ENCODE measurements at regions of chr10 and their contacts with region 1.

Region 1: DNA sequence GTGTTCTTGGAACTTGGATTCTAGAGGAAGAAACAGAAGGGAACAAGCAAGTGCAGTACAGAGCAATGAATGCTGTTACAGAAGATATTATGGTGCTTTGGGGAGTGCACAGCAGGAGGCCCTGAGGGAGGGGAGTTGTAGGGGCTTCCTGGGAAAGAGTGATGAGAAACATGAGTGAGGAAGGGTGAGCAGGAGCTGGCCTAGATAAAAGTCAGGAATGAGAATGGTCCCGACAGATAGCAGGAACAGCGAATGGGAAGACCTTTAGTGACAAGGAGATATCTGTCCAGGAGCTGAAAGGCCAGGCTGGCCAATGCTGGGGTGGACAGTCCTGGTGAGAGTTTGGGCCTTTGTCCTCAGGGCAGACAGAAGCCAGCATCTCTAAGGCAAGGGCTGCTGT is 20.6 kb upstream of the CCNJ start:
- DNase-seq: no peak
- ATAC-seq: no peak
- H3K4me3 ChIP-seq: no peak overlapping the region
- H3K27ac ChIP-seq: no peak overlapping the region
- H3K4me1 ChIP-seq: no peaks in the 10 kb centered on the region
- H3K27me3 ChIP-seq: no peaks in the 10 kb centered on the region
- CTCF ChIP-seq: no peak

Region 2: GRCh38 chr10:96292971-96293920 is 270.5 kb after region 1 on chr10:
- intact Hi-C with region 1: loop called in 8 of 10 experiments (anchors 2 to 10 kb)
- DNase-seq: peak in 1 of 2 donors; percentile 15
- ATAC-seq: peak in 7 of 8 donors; percentile 64 to 86 (median 79)
- H3K4me3 ChIP-seq: no peak overlapping the region
- H3K27ac ChIP-seq: no peak overlapping the region
- H3K4me1 ChIP-seq: peaks cover 0 to 5% (median 0%) of the 10 kb centered on the region in 9 donors
- H3K27me3 ChIP-seq: peaks cover 0 to 68% (median 35%) of the 10 kb centered on the region in 7 donors
- CTCF ChIP-seq: peak; percentile 8 to 76 (median 64)

Measured in heart right ventricle (tissue), 16 donors.